H1 (cell line): ENCODE measurements at regions of chr3 and their contacts with region 1.

Region 1: GRCh38 chr3:141303481-141304223 is 64.7 kb upstream of the ZBTB38 start:
- DNase-seq: peak in 1 of 2 experiments; percentile 68
- H3K4me3 ChIP-seq: no peak overlapping the region
- H3K27ac ChIP-seq: no peak overlapping the region
- H3K4me1 ChIP-seq: no peaks in the 10 kb centered on the region; a peak in 2 of 7 replicates
- H3K27me3 ChIP-seq: peaks cover 0 to 7% (median 3%) of the 10 kb centered on the region in 4 experiments; a peak in 1 of 7 replicates
- CTCF ChIP-seq: peak in 2 of 3 experiments; percentile 60 to 62; a peak in 3 of 4 replicates
- EP300 ChIP-seq: no peak
- POLR2A ChIP-seq: no peak
- RAD21 ChIP-seq: peak; percentile 64 to 71

Region 2: DNA sequence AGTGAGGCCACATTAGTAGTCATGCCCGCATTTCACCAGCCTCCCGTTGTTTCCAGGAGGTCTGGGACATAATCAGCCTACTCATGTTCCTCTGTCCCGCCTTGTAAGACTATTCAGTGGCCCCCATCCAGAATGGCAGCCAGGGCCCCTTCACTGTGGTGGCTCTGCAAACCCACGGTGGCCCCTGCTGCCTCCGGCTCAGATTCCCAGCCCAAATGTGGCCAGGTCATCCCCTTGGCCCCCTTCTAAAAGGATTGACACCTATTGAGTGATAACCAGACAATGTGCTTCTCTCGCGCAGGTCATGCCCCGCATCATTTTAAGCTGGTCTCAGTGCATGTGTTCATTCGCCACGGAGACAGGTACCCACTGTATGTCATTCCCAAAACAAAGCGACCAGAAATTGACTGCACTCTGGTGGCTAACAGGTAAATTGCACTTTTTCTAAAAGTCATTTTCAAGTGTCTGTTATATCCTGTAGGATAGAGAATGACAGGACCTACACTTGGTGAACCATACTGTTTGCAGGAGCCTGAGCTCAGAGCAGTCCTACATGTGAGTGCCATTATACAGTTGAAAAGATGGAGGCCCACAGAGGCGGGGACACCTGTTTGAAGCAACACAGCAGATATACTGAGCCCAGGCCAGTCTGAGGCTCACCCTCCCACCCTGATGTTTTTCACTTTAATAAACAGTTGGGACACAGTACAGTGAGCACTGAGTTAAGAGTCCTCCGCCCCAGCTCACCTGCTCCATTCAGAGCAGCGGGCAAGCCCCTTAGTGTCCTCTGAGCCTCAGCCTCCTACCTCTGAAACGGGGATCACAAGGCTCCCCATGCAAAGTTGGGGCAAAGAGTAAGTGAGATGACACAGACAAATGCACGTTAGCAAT is 24.3 kb before region 1 on chr3:
- CTCF ChIA-PET with region 1: interaction called, 59 read pairs
- POLR2A ChIA-PET with region 1: no interaction called
- DNase-seq: no peak
- H3K4me3 ChIP-seq: no peak overlapping the region
- H3K27ac ChIP-seq: no peak overlapping the region
- H3K4me1 ChIP-seq: no peaks in the 10 kb centered on the region
- H3K27me3 ChIP-seq: no peaks in the 10 kb centered on the region
- CTCF ChIP-seq: peak in 2 of 3 experiments; percentile 52 to 60; a peak in 3 of 4 replicates
- EP300 ChIP-seq: no peak
- POLR2A ChIP-seq: no peak
- RAD21 ChIP-seq: peak; percentile 58 to 63

Region 3: GRCh38 chr3:141291559-141292355 is 11.9 kb before region 1 on chr3:
- CTCF ChIA-PET with region 1: interaction called, 22 read pairs
- POLR2A ChIA-PET with region 1: interaction called, 4 read pairs
- DNase-seq: no peak
- H3K4me3 ChIP-seq: no peak overlapping the region
- H3K27ac ChIP-seq: no peak overlapping the region
- H3K4me1 ChIP-seq: no peaks in the 10 kb centered on the region
- H3K27me3 ChIP-seq: no peaks in the 10 kb centered on the region
- CTCF ChIP-seq: no peak
- EP300 ChIP-seq: no peak
- POLR2A ChIP-seq: no peak
- RAD21 ChIP-seq: no peak

Region 4: DNA sequence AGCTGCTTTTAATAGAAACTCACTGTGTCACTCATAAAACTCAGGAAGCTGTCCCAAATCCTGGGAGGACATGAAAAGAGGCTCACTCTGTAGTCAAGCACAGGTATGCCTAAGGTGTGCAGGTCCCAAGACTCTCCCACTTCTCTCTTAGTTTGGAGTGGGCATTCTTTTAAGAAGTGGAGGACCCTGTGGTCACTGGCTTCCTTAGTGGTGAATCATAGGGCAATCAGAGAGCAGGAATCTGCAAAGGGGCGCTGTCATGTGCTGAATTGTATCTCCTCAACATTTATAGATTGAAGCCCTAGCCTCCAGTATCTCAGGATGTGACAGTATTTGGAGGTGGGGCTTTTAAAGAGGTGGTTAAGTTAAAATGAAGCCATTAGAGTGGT is 17.5 kb after region 1 on chr3:
- CTCF ChIA-PET with region 1: interaction called, 12 read pairs
- POLR2A ChIA-PET with region 1: no interaction called
- DNase-seq: no peak
- H3K4me3 ChIP-seq: no peak overlapping the region
- H3K27ac ChIP-seq: no peak overlapping the region
- H3K4me1 ChIP-seq: no peaks in the 10 kb centered on the region
- H3K27me3 ChIP-seq: no peaks in the 10 kb centered on the region
- CTCF ChIP-seq: no peak
- EP300 ChIP-seq: no peak
- POLR2A ChIP-seq: no peak
- RAD21 ChIP-seq: no peak

Region 5: DNA sequence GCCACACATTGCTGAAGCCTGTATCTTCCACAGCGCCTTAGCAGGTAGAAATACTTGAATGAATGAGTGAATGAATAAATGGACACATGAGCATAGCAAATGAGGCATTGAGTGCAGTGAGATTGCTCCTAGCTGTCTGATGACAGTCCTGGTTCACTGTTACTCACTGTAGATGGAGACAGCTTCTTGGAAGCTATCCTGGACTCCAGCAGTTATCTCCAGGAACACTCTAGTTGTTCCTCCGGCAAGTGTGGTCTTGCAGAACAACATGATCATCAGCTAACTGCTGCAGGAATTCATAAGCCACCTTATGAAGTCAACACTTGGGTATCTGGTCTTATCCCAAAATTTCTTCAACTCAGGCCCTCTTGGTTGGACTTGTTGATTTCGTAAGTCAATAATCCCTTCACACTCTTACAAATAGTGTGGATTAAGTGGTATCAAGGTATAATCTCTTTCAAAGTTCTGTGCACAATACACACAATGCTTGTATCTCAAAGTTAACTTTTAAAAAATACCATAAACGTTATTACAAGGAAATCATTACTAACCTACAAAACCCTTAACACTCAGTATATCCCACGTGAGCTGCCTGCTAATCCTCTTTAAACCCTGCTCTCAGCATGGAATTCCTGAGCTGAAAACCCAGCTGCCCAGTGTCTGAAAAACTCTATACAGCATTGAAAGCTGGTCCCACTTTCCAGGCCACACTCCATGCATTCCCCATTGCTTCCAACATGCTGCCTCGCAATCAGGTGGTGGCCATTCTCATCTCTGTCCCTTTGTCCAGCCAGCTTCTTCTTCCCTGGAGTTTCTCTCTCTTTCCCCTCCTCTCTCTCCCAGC is 50.2 kb after region 1 on chr3:
- CTCF ChIA-PET with region 1: interaction called, 55 read pairs
- POLR2A ChIA-PET with region 1: no interaction called
- DNase-seq: no peak
- H3K4me3 ChIP-seq: no peak overlapping the region
- H3K27ac ChIP-seq: no peak overlapping the region
- H3K4me1 ChIP-seq: no peaks in the 10 kb centered on the region
- H3K27me3 ChIP-seq: no peaks in the 10 kb centered on the region
- CTCF ChIP-seq: no peak
- EP300 ChIP-seq: no peak
- POLR2A ChIP-seq: no peak
- RAD21 ChIP-seq: no peak

Region 6: DNA sequence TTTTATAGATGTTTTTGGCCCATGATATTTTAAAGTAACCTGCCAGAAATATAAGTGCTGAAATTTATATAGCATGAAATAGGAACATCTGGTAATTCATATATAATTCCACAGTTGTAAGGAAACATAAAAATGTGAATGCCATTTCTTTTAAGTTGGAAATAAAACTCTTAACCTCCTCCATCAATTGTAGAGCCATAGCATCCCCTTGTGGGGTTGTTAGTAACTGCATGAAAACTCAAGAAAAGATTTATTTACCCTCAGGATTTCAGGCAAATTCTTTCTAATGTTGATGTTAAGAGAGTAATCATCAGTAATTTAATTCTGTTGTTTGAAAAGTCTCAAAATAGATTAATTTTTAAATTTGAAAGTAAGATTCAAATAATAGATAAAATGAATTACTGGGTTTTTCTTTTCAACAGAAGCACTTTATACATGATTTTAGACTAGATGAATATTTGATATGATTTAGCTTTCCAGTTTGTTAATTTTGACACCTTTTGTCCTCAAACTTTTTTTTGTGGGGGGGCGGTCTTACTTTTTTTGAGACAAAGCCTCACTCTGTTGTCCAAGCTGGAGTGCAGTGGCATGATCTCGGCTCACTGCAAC is 257.9 kb after region 1 on chr3:
- CTCF ChIA-PET with region 1: interaction called, 11 read pairs
- POLR2A ChIA-PET with region 1: no interaction called
- DNase-seq: no peak
- H3K4me3 ChIP-seq: no peak overlapping the region
- H3K27ac ChIP-seq: no peak overlapping the region
- H3K4me1 ChIP-seq: no peaks in the 10 kb centered on the region
- H3K27me3 ChIP-seq: no peaks in the 10 kb centered on the region
- CTCF ChIP-seq: peak in 2 of 3 experiments; percentile 67 to 80; a peak in 2 of 4 replicates
- EP300 ChIP-seq: no peak
- POLR2A ChIP-seq: no peak
- RAD21 ChIP-seq: peak; percentile 88 to 97